Activated naive CD8-positive, alpha-beta T cell treated with anti-CD3 and anti-CD28 coated beads, Interleukin-2, amount 10 ng/mL, durations not matched to agents 7 days and 5 days (primary cell): ENCODE measurements at regions of chr2 and their contacts with region 1.

Region 1: DNA sequence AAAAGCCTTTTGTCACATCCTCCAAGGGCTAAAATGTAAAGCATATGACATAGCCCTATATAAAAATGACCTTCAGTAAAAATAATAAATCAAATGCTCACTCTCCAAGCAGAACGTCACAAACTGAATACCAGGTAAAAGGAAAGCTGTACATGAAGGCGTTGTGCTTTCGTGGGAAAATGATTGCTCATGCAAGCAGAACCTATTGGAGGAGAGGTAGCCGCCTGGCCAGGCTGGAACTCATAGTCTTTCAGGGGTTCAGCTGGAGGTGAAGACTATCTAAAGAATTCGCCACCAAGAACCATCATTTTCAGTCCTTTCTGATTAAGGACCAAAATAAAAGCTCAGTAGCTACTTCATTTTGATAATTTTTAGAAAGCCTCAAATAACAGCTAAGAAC is 44.7 kb downstream of the ANKRD44 start:
- DNase-seq: no peak
- ATAC-seq: no peak
- H3K4me3 Mint-ChIP-seq: peak overlapping the region; percentile 76
- H3K27ac Mint-ChIP-seq: peak overlapping the region; percentile 84
- H3K4me1 Mint-ChIP-seq: peaks cover 84% of the 10 kb centered on the region
- H3K27me3 Mint-ChIP-seq: no peaks in the 10 kb centered on the region

Region 2: GRCh38 chr2:197255543-197255942 is 10.4 kb before region 1 on chr2:
- POLR2A ChIA-PET with region 1: interaction called, 13 read pairs
- DNase-seq: peak; percentile 77
- ATAC-seq: peak; percentile 95
- H3K4me3 Mint-ChIP-seq: peak overlapping the region; percentile 84
- H3K27ac Mint-ChIP-seq: peak overlapping the region; percentile 92
- H3K4me1 Mint-ChIP-seq: peaks cover 62% of the 10 kb centered on the region
- H3K27me3 Mint-ChIP-seq: no peaks in the 10 kb centered on the region